Activated CD8-positive, alpha-beta T cell treated with anti-CD3 and anti-CD28 coated beads for 36 hours (primary cell): ENCODE measurements at regions of chr1 and their contacts with region 1.

Region 1: DNA sequence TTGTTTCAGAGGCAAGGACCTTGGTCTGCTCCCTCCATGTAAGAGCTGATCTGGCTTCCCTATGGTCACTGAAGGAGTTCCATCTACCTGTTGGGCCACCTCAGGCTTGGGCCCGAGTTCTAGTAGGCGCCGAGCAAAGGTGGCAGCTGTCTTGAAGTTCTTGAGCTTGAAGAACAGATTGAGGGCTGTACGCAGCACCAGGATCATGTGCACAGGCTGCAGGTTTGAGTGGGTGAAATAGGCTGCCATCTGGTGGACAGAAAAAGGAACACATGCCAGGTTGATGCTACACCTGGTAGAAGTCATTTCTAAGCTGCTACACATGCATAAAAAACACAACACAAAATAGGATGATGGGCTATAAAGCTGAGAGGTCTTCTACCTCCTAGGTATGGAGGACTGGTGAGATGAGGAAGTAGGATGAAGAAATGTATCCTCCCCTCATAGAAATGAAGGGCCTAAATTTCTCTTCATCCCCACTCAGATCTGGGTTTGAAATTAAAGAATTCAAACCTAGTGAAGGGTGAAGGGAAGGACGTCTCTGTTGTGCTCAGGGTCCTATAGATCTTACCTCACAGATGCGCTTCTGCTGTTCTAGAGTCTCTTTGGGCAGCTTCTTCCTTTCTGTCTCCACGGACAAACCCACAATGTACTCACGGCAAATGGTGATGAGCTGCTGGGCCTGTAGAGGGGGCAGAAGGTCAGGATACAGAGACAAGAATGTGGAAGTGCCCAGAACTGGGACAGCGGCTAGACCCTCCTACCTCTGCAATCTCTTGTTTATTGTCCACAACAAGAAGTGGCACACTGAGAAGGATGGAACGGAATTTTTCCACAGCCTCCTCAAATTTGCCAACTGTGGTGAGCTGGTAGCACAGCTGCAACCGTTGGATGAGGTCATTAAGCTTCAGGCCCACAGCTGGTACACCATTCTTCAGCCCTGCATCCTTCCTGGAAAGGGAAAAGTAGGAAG is 6.6 kb upstream of the PEX19 start:
- DNase-seq: peak; percentile 75
- ATAC-seq: peak; percentile 97
- H3K4me3 Mint-ChIP-seq: no peak overlapping the region
- H3K27ac Mint-ChIP-seq: no peak overlapping the region
- H3K4me1 Mint-ChIP-seq: peaks cover 4% of the 10 kb centered on the region
- H3K27me3 Mint-ChIP-seq: no peaks in the 10 kb centered on the region
- CTCF ChIP-seq: peak; percentile 72

Region 2: GRCh38 chr1:160031365-160032164 is 260.0 kb before region 1 on chr1 and contains the start of gene PIGM:
- CTCF ChIA-PET with region 1: no interaction called
- POLR2A ChIA-PET with region 1: no interaction called
- intact Hi-C with region 1: no loop called
- DNase-seq: peak; percentile 98
- ATAC-seq: peak; percentile 99
- H3K4me3 Mint-ChIP-seq: peak within 1 kb of the TSS; percentile 88
- H3K27ac Mint-ChIP-seq: peak within 1 kb of the TSS; percentile 81
- H3K4me1 Mint-ChIP-seq: peaks cover 32% of the 10 kb centered on the region
- H3K27me3 Mint-ChIP-seq: no peaks in the 10 kb centered on the region
- CTCF ChIP-seq: no peak
- total RNA-seq, gene PIGM: 3.9 to 4.0 TPM

Region 3: GRCh38 chr1:160108888-160109662 is 182.5 kb before region 1 on chr1:
- CTCF ChIA-PET with region 1: interaction called, 102 read pairs
- POLR2A ChIA-PET with region 1: no interaction called
- intact Hi-C with region 1: loop called (anchors 5 kb)
- DNase-seq: peak; percentile 69
- ATAC-seq: peak; percentile 74
- H3K4me3 Mint-ChIP-seq: no peak overlapping the region
- H3K27ac Mint-ChIP-seq: peak overlapping the region; percentile 84
- H3K4me1 Mint-ChIP-seq: peaks cover 6% of the 10 kb centered on the region
- H3K27me3 Mint-ChIP-seq: peaks cover 4% of the 10 kb centered on the region
- CTCF ChIP-seq: peak; percentile 54

Region 4: DNA sequence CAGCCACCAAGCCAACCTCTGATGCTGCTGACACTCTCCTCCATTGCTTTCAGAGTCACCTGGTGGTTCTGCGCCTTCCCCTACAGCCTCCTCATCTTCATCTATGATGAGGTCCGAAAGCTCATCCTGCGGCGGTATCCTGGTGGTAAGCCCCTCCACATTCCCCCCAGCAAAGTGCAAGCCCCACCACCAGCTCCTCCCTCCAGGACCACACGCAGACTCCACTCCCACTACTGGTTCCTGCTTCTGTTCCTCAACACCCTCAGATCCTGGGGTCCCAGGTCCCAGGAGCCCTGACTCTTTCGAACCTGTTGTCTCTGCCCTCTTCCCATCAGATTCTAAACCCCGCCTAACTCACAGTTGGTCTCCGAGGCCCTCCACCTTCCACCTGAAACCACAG is 151.7 kb before region 1 on chr1:
- CTCF ChIA-PET with region 1: no interaction called
- POLR2A ChIA-PET with region 1: no interaction called
- intact Hi-C with region 1: no loop called
- DNase-seq: no peak
- ATAC-seq: no peak
- H3K4me3 Mint-ChIP-seq: no peak overlapping the region
- H3K27ac Mint-ChIP-seq: no peak overlapping the region
- H3K4me1 Mint-ChIP-seq: no peaks in the 10 kb centered on the region
- H3K27me3 Mint-ChIP-seq: peaks cover 9% of the 10 kb centered on the region
- CTCF ChIP-seq: no peak

Region 5: GRCh38 chr1:160205242-160206035 is 86.1 kb before region 1 on chr1 and contains the start of gene PEA15:
- CTCF ChIA-PET with region 1: interaction called, 31 read pairs
- POLR2A ChIA-PET with region 1: interaction called, 3 read pairs
- intact Hi-C with region 1: no loop called
- DNase-seq: peak; percentile 70
- ATAC-seq: peak; percentile 76
- H3K4me3 Mint-ChIP-seq: peak within 1 kb of the TSS; percentile 82
- H3K27ac Mint-ChIP-seq: peak within 1 kb of the TSS; percentile 87
- H3K4me1 Mint-ChIP-seq: peaks cover 48% of the 10 kb centered on the region
- H3K27me3 Mint-ChIP-seq: no peaks in the 10 kb centered on the region
- CTCF ChIP-seq: no peak
- total RNA-seq, gene PEA15: 31.8 to 34.1 TPM

Region 6: GRCh38 chr1:160244209-160244608 is 47.3 kb before region 1 on chr1:
- CTCF ChIA-PET with region 1: interaction called, 53 read pairs
- POLR2A ChIA-PET with region 1: no interaction called
- intact Hi-C with region 1: no loop called
- DNase-seq: no peak
- ATAC-seq: no peak
- H3K4me3 Mint-ChIP-seq: no peak overlapping the region
- H3K27ac Mint-ChIP-seq: no peak overlapping the region
- H3K4me1 Mint-ChIP-seq: peaks cover 5% of the 10 kb centered on the region
- H3K27me3 Mint-ChIP-seq: no peaks in the 10 kb centered on the region
- CTCF ChIP-seq: no peak

Region 7: DNA sequence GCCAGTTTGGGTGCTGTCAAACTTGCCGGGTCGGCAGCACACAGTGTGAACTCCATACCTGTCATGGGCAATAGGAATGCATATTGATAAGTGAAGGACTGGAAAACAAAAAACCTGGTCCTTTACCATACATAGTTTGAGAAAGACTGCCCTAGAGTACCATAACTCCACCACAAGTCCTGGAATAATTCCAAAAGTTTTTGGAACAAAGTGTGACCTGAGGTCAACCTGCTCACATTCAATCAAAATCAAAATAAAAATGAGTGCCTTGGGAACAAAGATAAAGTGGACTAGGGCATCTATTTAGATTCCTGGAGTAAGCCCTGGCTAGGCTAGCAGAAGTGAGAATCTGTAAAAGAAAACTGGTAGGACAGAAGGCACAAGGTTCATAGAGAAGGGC is 14.2 kb before region 1 on chr1:
- CTCF ChIA-PET with region 1: interaction called, 47 read pairs
- POLR2A ChIA-PET with region 1: no interaction called
- intact Hi-C with region 1: no loop called
- DNase-seq: no peak
- ATAC-seq: no peak
- H3K4me3 Mint-ChIP-seq: no peak overlapping the region
- H3K27ac Mint-ChIP-seq: peak overlapping the region; percentile 52
- H3K4me1 Mint-ChIP-seq: no peaks in the 10 kb centered on the region
- H3K27me3 Mint-ChIP-seq: no peaks in the 10 kb centered on the region
- CTCF ChIP-seq: no peak

Region 8: GRCh38 chr1:160328184-160328583 is 36.6 kb after region 1 on chr1:
- CTCF ChIA-PET with region 1: interaction called, 26 read pairs
- POLR2A ChIA-PET with region 1: interaction called, 3 read pairs
- intact Hi-C with region 1: no loop called
- DNase-seq: no peak
- ATAC-seq: no peak
- H3K4me3 Mint-ChIP-seq: no peak overlapping the region
- H3K27ac Mint-ChIP-seq: no peak overlapping the region
- H3K4me1 Mint-ChIP-seq: peaks cover 4% of the 10 kb centered on the region
- H3K27me3 Mint-ChIP-seq: no peaks in the 10 kb centered on the region
- CTCF ChIP-seq: no peak

Region 9: DNA sequence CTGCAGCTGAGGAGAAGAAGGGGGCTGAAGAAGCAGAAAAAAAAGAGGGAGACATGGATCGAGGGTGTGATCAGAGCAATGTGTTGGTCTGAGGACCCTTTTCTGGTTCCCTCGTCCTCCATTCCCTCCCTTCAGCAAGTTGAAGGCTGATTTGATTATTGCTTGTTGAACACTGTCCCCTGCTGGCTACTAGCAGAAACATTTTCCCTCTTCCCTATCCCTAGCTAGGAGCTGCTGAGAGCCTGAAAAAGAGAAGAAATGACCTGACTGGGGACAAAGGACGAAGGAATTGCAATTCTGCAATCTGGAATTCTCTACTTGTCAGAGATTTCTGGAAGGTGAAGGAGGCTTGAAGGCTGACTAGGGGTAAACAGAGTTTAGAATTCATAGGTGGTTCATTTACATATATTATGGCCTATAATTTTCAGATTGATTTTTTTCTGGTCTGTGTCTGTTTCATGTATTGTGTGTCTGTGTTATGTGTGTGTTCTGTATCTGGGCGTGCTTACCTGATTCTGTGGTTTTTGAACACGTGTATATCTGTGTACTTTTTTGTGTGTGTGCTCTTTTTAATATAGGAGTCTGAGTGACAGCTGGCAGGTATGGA is 85.1 kb after region 1 on chr1:
- CTCF ChIA-PET with region 1: interaction called, 66 read pairs
- POLR2A ChIA-PET with region 1: interaction called, 3 read pairs
- intact Hi-C with region 1: no loop called
- DNase-seq: peak; percentile 41
- ATAC-seq: peak; percentile 85
- H3K4me3 Mint-ChIP-seq: no peak overlapping the region
- H3K27ac Mint-ChIP-seq: no peak overlapping the region
- H3K4me1 Mint-ChIP-seq: peaks cover 11% of the 10 kb centered on the region
- H3K27me3 Mint-ChIP-seq: no peaks in the 10 kb centered on the region
- CTCF ChIP-seq: peak; percentile 95